ENCODE measurements at regions of chr22 and their contacts with region 1.

Region 1: GRCh38 chr22:29883045-29883774 is at the start of gene MTMR3:
- DNase-seq: peak; percentile 94
- ATAC-seq: peak; percentile 80
- H3K4me3 ChIP-seq: peak within 1 kb of the TSS; percentile 76 to 99 (median 87)
- H3K4me3 Mint-ChIP-seq: peak within 1 kb of the TSS; percentile 92
- H3K27ac ChIP-seq: peak within 1 kb of the TSS; percentile 71 to 91
- H3K27ac Mint-ChIP-seq: peak within 1 kb of the TSS; percentile 86
- H3K4me1 ChIP-seq: peaks cover 21% of the 10 kb centered on the region in 2 donors
- H3K4me1 Mint-ChIP-seq: peaks cover 12% of the 10 kb centered on the region
- H3K27me3 ChIP-seq: no peaks in the 10 kb centered on the region
- H3K27me3 Mint-ChIP-seq: no peaks in the 10 kb centered on the region
- CTCF ChIP-seq: peak; percentile 47
- total RNA-seq, gene MTMR3: 67.8 and 76.5 TPM in 2 replicates

Region 2: GRCh38 chr22:29716814-29717545 is 166.2 kb before region 1 on chr22:
- CTCF ChIA-PET with region 1: no interaction called
- POLR2A ChIA-PET with region 1: no interaction called
- intact Hi-C with region 1: no loop called
- DNase-seq: no peak
- ATAC-seq: no peak
- H3K4me3 ChIP-seq: no peak overlapping the region
- H3K4me3 Mint-ChIP-seq: no peak overlapping the region
- H3K27ac ChIP-seq: no peak overlapping the region
- H3K27ac Mint-ChIP-seq: no peak overlapping the region
- H3K4me1 ChIP-seq: peaks cover 7 to 8% of the 10 kb centered on the region in 2 donors
- H3K4me1 Mint-ChIP-seq: peaks cover 9% of the 10 kb centered on the region
- H3K27me3 ChIP-seq: peaks cover 0 to 40% (median 12%) of the 10 kb centered on the region in 4 experiments
- H3K27me3 Mint-ChIP-seq: peaks cover 48% of the 10 kb centered on the region
- CTCF ChIP-seq: no peak

Region 3: GRCh38 chr22:29837780-29838598 is 45.2 kb before region 1 on chr22 and contains the start of gene ASCC2:
- CTCF ChIA-PET with region 1: no interaction called
- POLR2A ChIA-PET with region 1: interaction called, 11 read pairs
- intact Hi-C with region 1: loop called (anchors 1 kb)
- DNase-seq: peak; percentile 99
- ATAC-seq: peak; percentile 100
- H3K4me3 ChIP-seq: peak within 1 kb of the TSS; percentile 75 to 96 (median 91)
- H3K4me3 Mint-ChIP-seq: peak within 1 kb of the TSS; percentile 93
- H3K27ac ChIP-seq: peak within 1 kb of the TSS; percentile 80 to 91
- H3K27ac Mint-ChIP-seq: peak within 1 kb of the TSS; percentile 96
- H3K4me1 ChIP-seq: peaks cover 15 to 19% of the 10 kb centered on the region in 2 donors
- H3K4me1 Mint-ChIP-seq: peaks cover 26% of the 10 kb centered on the region
- H3K27me3 ChIP-seq: no peaks in the 10 kb centered on the region
- H3K27me3 Mint-ChIP-seq: peaks cover 4% of the 10 kb centered on the region
- CTCF ChIP-seq: no peak
- total RNA-seq, gene ASCC2: 84.0 and 87.2 TPM in 2 replicates

Region 4: GRCh38 chr22:29871684-29872083 is 11.5 kb before region 1 on chr22:
- CTCF ChIA-PET with region 1: no interaction called
- POLR2A ChIA-PET with region 1: interaction called, 5 read pairs
- intact Hi-C with region 1: loop called (anchors 1 kb)
- DNase-seq: no peak
- ATAC-seq: no peak
- H3K4me3 ChIP-seq: no peak overlapping the region
- H3K4me3 Mint-ChIP-seq: no peak overlapping the region
- H3K27ac ChIP-seq: no peak overlapping the region
- H3K27ac Mint-ChIP-seq: no peak overlapping the region
- H3K4me1 ChIP-seq: no peaks in the 10 kb centered on the region
- H3K4me1 Mint-ChIP-seq: no peaks in the 10 kb centered on the region
- H3K27me3 ChIP-seq: no peaks in the 10 kb centered on the region
- H3K27me3 Mint-ChIP-seq: peaks cover 12% of the 10 kb centered on the region
- CTCF ChIP-seq: no peak

Measured in B cell (primary cell).